AG04450 (cell line): ENCODE measurements at regions of chr17 and their contacts with region 1.

Region 1: DNA sequence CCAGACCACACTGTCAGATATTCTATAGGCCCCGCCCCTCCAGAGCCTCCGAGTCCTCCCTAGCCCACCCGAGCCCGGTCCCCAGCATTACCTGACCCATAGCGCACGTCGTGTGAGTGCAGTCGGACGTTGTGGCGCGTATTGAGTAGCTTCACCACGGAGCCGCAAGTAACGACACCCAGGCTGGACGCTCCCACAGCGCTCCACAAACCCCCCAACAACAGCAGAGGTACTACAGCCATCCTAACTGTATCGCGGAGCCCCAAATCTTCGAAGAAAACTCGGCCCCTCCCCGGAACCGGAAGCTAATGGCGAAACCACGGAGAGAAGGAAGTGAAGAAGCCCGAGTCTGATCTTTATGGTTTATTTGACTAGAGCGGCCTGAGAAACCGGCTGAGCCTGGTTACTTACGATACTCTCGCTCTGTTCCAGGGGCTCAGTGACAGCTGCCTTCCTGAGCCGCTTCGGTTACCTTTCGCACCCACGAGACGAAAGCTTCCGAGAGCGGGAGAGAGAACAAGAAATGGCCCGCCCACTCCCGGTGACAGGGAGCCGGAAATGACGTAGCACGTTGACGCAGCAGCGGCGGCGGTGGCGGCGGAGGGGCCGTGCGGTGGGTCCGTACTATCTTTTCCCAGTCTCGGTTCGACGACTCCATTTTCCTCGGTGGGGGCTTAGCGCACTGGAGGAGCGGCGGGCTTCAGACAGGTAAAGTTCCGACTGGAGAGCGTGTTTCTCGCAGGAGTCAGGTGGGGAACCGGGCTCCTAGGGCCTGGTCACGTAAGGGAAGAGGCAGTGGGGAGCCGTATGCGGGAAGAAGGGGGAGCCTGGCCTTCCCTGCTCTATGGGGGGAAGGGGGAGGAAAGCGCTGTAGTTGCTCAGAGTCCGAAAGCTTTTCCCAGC is at the starts of genes SDF2 and SUPT6H:
- DNase-seq: no peak
- H3K4me3 ChIP-seq: peak within 1 kb of the TSS; percentile 93
- H3K27ac ChIP-seq: peak within 1 kb of the TSS; percentile 94
- H3K27me3 ChIP-seq: no peaks in the 10 kb centered on the region
- CTCF ChIP-seq: no peak
- polyA plus RNA-seq, gene SDF2: 76.1 and 79.4 TPM in 2 replicates
- polyA plus RNA-seq, gene SUPT6H: 41.0 and 52.2 TPM in 2 replicates

Region 2: DNA sequence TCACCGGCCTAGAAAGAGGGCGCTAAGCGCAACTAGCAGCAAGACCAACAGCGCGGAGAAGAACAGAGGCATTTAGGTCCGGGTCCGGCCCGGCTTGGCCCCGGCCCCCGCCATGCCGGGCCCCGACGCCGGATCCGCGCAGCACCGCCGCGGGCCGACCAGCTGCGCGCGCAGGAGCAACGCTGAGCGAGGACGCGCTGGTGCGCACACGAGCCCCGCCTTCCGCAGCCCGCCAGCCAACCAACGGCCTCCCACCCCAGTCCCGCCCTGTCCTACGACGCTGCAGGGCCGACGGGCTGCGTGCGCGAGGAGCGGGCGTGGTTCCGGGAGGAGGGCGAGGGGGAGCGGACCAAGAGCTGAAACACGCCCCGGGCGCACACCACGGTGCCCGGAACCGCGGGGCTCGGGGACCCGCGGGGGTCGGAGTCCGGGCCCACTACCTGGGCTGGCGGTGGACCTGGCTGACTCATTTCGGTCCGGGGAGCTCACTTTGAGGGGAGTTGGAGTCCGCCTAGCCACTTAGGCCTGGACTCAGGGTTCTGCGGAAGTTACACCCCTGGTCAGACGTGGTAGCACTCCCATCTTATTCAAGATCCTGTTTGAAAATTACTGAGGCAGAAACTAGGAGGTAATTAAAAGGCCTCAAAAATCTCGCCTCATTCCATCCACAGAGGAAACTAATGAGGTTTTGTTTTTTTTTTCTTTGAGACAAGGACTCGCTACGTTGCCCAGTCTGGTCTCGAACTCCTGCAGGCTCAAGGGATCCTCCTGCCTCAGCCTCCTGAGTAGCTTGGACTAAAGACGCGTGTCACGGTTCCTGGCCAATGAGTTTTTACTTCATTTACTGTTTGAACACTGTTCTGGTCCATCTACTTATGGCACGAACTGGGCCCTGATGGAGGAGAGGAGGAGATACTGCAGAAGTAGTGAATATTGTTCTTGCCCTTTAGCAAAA is 16.6 kb before region 1 on chr17 and contains the start of gene BLTP2:
- CTCF ChIA-PET with region 1: interaction called, 19 read pairs
- POLR2A ChIA-PET with region 1: interaction called, 17 read pairs
- DNase-seq: peak; percentile 84
- H3K4me3 ChIP-seq: peak within 1 kb of the TSS; percentile 91
- H3K27ac ChIP-seq: peak within 1 kb of the TSS; percentile 52
- H3K27me3 ChIP-seq: no peaks in the 10 kb centered on the region
- CTCF ChIP-seq: no peak
- polyA plus RNA-seq, gene BLTP2: 141 and 156 TPM in 2 replicates

Region 3: DNA sequence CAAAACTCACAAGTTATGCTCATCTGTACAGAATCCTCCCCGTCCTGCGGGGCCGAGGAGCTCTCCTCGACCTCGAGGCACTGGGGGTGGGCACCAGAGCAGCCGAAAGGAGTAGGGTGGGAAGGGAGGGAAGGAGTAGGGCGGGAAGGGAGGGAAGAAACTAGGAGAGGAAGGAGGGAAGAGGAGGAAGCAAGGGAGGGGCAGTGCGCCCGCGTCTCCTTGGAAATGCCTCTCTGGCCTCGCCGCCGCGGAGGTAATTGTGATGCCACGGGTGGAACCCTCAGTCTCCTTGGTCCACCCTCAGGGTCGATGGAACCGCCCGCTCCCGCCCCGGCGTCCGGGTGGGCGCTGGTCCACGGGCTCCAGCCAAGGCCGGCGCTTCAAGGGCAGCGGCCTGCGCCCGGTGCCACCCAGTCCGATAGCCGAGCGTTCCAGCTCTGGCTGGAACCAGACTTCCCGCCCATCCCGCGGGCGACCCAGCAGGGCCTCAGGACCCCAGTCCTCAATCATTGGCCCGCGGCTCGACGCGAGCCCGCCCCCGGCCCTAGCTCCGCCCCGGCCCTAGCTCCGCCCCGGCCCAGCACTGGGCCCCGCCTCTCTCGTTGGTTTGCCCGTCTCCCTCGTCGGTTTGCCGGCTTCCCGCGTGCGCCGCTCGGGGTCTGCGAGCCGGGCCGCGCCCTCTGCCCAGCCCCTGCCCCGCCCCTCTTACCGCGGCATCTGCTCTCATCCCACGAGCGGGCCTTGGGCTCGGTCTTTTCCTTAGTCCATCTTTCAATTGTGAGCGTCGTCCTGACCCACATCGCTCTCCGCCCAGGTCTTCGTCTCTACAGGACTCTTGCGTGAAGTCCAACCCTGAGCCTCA is 49.2 kb after region 1 on chr17:
- CTCF ChIA-PET with region 1: no interaction called
- POLR2A ChIA-PET with region 1: interaction called, 12 read pairs
- DNase-seq: peak; percentile 68
- H3K4me3 ChIP-seq: peak overlapping the region; percentile 64
- H3K27ac ChIP-seq: peak overlapping the region; percentile 78
- H3K27me3 ChIP-seq: no peaks in the 10 kb centered on the region
- CTCF ChIP-seq: no peak